ENCODE measurements at regions of chr1 and their contacts with region 1.

Region 1: DNA sequence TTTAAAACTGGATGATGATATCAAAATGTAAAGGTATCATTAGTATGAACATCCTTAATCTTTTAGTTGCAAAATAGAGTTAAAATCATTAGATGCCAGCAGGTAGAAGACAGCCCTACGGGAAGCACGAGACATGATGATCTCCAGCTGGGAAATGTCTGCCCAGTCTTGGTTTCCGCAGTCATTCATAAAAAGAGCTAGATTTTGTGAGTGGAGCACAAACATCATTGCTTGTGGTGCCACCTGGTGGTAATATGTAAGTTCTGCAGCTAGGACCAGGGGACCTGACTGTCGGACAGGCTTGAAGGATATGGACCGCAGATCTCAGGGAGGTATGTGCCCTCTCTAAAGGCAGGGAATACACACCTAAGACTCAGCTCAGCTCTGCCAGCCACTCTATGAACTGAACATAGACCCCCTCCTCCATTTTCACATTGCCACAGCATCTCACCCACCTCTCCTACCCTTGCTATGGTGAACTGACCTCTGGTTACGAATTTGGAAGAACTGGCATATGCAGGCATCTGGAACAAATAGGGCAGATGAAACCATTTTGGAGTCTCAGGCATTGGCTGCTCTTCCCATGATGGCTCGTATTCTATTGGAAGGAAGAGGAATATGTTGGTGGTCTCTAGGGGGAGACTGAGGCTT is 9.2 kb downstream of the FCMR start:
- DNase-seq: peak; percentile 84
- ATAC-seq: peak; percentile 62
- H3K4me3 ChIP-seq: peak overlapping the region in 4 of 5 experiments; percentile 8 to 32 (median 18)
- H3K4me3 Mint-ChIP-seq: no peak overlapping the region
- H3K27ac ChIP-seq: peak overlapping the region; percentile 30 to 88
- H3K27ac Mint-ChIP-seq: peak overlapping the region; percentile 87
- H3K4me1 ChIP-seq: peaks cover 97 to 99% of the 10 kb centered on the region in 2 donors
- H3K4me1 Mint-ChIP-seq: peaks cover 94% of the 10 kb centered on the region
- H3K27me3 ChIP-seq: no peaks in the 10 kb centered on the region
- H3K27me3 Mint-ChIP-seq: no peaks in the 10 kb centered on the region
- CTCF ChIP-seq: peak; percentile 86

Region 2: DNA sequence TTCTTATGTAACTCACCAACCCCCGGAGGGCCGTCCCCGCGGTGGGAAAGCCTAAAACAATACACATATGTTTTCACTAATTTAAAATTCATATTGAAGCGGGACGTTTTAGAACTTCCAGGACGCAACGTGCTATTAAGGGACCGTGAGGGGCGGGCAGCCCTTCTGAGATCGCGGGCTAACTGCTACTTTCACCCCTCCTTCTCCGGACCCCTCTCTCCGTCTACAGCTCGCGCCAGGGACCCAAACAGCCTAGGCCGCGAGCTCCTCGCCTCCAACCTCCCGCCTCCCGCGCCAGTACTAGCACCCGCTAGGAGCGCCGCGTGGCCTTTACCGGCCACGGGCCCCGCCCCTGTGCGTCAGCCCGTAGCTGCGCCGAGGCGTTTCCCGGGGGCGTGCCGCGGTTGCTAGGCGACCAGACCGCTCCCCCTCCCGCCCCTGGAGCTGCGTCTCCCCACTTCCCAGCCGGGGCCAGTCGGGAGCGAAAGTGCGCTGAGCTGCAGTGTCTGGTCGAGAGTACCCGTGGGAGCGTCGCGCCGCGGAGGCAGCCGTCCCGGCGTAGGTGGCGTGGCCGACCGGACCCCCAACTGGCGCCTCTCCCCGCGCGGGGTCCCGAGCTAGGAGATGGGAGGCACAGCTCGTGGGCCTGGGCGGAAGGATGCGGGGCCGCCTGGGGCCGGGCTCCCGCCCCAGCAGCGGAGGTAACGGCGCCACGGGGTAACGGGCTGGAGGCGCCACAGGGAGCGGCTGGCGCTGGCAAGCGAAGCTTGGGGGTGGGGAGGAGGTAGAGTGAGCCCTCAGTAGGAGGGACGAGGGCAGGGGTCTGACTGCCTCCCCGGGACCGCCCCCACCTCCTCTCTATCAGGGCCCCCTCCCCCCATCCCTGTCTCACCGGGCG is 277.2 kb before region 1 on chr1 and contains the start of gene DYRK3:
- CTCF ChIA-PET with region 1: interaction called, 32 read pairs
- POLR2A ChIA-PET with region 1: no interaction called
- intact Hi-C with region 1: loop called (anchors 1 kb)
- DNase-seq: peak; percentile 89
- ATAC-seq: peak; percentile 93
- H3K4me3 ChIP-seq: peak within 1 kb of the TSS; percentile 54 to 77 (median 67)
- H3K4me3 Mint-ChIP-seq: peak within 1 kb of the TSS; percentile 92
- H3K27ac ChIP-seq: no peak within 1 kb of the TSS
- H3K27ac Mint-ChIP-seq: peak within 1 kb of the TSS; percentile 74
- H3K4me1 ChIP-seq: peaks cover 17 to 22% of the 10 kb centered on the region in 2 donors
- H3K4me1 Mint-ChIP-seq: peaks cover 29% of the 10 kb centered on the region
- H3K27me3 ChIP-seq: peaks cover 0 to 11% (median 7%) of the 10 kb centered on the region in 4 experiments
- H3K27me3 Mint-ChIP-seq: peaks cover 7% of the 10 kb centered on the region
- CTCF ChIP-seq: no peak
- total RNA-seq, gene DYRK3: 0.30 and 0.80 TPM in 2 replicates

Region 3: GRCh38 chr1:206803221-206803730 is 109.3 kb before region 1 on chr1:
- CTCF ChIA-PET with region 1: interaction called, 64 read pairs
- POLR2A ChIA-PET with region 1: no interaction called
- intact Hi-C with region 1: no loop called
- DNase-seq: peak; percentile 70
- ATAC-seq: peak; percentile 90
- H3K4me3 ChIP-seq: no peak overlapping the region
- H3K4me3 Mint-ChIP-seq: peak overlapping the region; percentile 13
- H3K27ac ChIP-seq: no peak overlapping the region
- H3K27ac Mint-ChIP-seq: peak overlapping the region; percentile 87
- H3K4me1 ChIP-seq: peaks cover 4 to 19% of the 10 kb centered on the region in 2 donors
- H3K4me1 Mint-ChIP-seq: peaks cover 35% of the 10 kb centered on the region
- H3K27me3 ChIP-seq: no peaks in the 10 kb centered on the region
- H3K27me3 Mint-ChIP-seq: no peaks in the 10 kb centered on the region
- CTCF ChIP-seq: no peak

Region 4: GRCh38 chr1:206834711-206835110 is 77.9 kb before region 1 on chr1:
- CTCF ChIA-PET with region 1: interaction called, 10 read pairs
- POLR2A ChIA-PET with region 1: no interaction called
- intact Hi-C with region 1: no loop called
- DNase-seq: no peak
- ATAC-seq: no peak
- H3K4me3 ChIP-seq: no peak overlapping the region
- H3K4me3 Mint-ChIP-seq: no peak overlapping the region
- H3K27ac ChIP-seq: no peak overlapping the region
- H3K27ac Mint-ChIP-seq: no peak overlapping the region
- H3K4me1 ChIP-seq: peaks cover 49 to 51% of the 10 kb centered on the region in 2 donors
- H3K4me1 Mint-ChIP-seq: peaks cover 49% of the 10 kb centered on the region
- H3K27me3 ChIP-seq: no peaks in the 10 kb centered on the region
- H3K27me3 Mint-ChIP-seq: peaks cover 12% of the 10 kb centered on the region
- CTCF ChIP-seq: no peak

Region 5: GRCh38 chr1:206865013-206865671 is 47.4 kb before region 1 on chr1 and contains the start of gene IL20:
- CTCF ChIA-PET with region 1: interaction called, 42 read pairs
- POLR2A ChIA-PET with region 1: no interaction called
- intact Hi-C with region 1: loop called (anchors 1 kb)
- DNase-seq: peak; percentile 82
- ATAC-seq: peak; percentile 80
- H3K4me3 ChIP-seq: no peak within 1 kb of the TSS
- H3K4me3 Mint-ChIP-seq: no peak within 1 kb of the TSS
- H3K27ac ChIP-seq: no peak within 1 kb of the TSS
- H3K27ac Mint-ChIP-seq: peak within 1 kb of the TSS; percentile 43
- H3K4me1 ChIP-seq: no peaks in the 10 kb centered on the region
- H3K4me1 Mint-ChIP-seq: peaks cover 7% of the 10 kb centered on the region
- H3K27me3 ChIP-seq: peaks cover 0 to 4% (median 0%) of the 10 kb centered on the region in 4 experiments
- H3K27me3 Mint-ChIP-seq: peaks cover 16% of the 10 kb centered on the region
- CTCF ChIP-seq: peak; percentile 97
- total RNA-seq, gene IL20: not detected in 2 replicates

Region 6: GRCh38 chr1:206935491-206936067 is 23.0 kb after region 1 on chr1:
- CTCF ChIA-PET with region 1: interaction called, 723 read pairs
- POLR2A ChIA-PET with region 1: interaction called, 69 read pairs
- intact Hi-C with region 1: loop called (anchors 1 kb)
- DNase-seq: peak; percentile 59
- ATAC-seq: peak; percentile 14
- H3K4me3 ChIP-seq: no peak overlapping the region
- H3K4me3 Mint-ChIP-seq: no peak overlapping the region
- H3K27ac ChIP-seq: no peak overlapping the region
- H3K27ac Mint-ChIP-seq: no peak overlapping the region
- H3K4me1 ChIP-seq: peaks cover 27 to 30% of the 10 kb centered on the region in 2 donors
- H3K4me1 Mint-ChIP-seq: peaks cover 30% of the 10 kb centered on the region
- H3K27me3 ChIP-seq: no peaks in the 10 kb centered on the region
- H3K27me3 Mint-ChIP-seq: no peaks in the 10 kb centered on the region
- CTCF ChIP-seq: peak; percentile 51

Region 7: DNA sequence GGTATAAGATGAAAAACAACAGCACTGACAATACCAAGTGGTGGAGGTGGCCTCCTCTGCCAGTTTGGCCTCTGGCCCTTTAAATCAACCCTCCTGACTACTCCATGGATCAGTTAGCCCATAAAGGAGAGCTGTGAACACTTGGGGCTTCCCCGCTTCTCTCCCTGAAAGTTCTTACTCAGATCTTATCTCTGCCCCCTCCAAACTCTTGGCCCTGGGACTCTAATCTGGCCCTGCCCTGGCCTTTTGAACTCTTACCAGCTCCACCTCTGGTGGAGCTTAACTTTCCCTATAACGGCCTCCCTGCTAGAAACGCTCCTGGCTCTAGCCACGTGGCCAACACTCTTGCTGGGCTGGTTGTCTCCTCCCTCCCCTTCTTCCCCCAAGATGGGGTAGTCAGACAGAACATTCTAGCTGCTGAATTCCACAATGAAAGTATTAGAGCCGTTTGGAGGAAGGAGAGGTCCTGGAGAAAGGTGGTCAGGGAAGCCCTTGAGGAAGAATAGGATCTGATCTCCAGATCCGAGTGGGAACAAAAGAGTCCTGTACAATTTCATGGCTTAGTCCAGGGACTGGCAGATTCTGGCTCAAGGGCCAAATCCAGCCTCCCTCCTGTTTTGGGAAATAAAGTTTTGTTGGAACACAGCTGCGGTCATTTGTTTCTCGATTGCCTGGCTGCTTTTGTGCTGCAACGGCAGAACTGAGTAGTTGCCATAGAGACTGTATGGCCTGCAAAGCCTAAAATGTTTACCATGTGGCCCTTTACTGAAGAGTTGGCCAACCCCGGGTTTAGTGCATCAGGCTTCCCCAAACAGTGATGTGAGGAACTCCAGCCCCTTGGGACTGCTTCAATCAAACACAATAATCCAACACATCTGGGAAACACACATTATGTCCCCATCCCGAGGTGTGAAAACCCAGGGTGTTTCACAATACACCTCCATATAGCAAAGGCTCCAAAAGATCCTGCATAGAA is 43.2 kb after region 1 on chr1:
- CTCF ChIA-PET with region 1: interaction called, 11 read pairs
- POLR2A ChIA-PET with region 1: no interaction called
- intact Hi-C with region 1: no loop called
- DNase-seq: no peak
- ATAC-seq: no peak
- H3K4me3 ChIP-seq: no peak overlapping the region
- H3K4me3 Mint-ChIP-seq: no peak overlapping the region
- H3K27ac ChIP-seq: no peak overlapping the region
- H3K27ac Mint-ChIP-seq: no peak overlapping the region
- H3K4me1 ChIP-seq: peaks cover 7 to 11% of the 10 kb centered on the region in 2 donors
- H3K4me1 Mint-ChIP-seq: peaks cover 26% of the 10 kb centered on the region
- H3K27me3 ChIP-seq: no peaks in the 10 kb centered on the region
- H3K27me3 Mint-ChIP-seq: peaks cover 3% of the 10 kb centered on the region
- CTCF ChIP-seq: no peak

Region 8: GRCh38 chr1:206992790-206993189 is 80.2 kb after region 1 on chr1:
- CTCF ChIA-PET with region 1: no interaction called
- POLR2A ChIA-PET with region 1: no interaction called
- intact Hi-C with region 1: no loop called
- DNase-seq: no peak
- ATAC-seq: no peak
- H3K4me3 ChIP-seq: no peak overlapping the region
- H3K4me3 Mint-ChIP-seq: no peak overlapping the region
- H3K27ac ChIP-seq: no peak overlapping the region
- H3K27ac Mint-ChIP-seq: no peak overlapping the region
- H3K4me1 ChIP-seq: no peaks in the 10 kb centered on the region
- H3K4me1 Mint-ChIP-seq: no peaks in the 10 kb centered on the region
- H3K27me3 ChIP-seq: peaks cover 0 to 3% (median 0%) of the 10 kb centered on the region in 4 experiments
- H3K27me3 Mint-ChIP-seq: peaks cover 37% of the 10 kb centered on the region
- CTCF ChIP-seq: no peak

Measured in B cell (primary cell).